Mammary epithelial cell (primary cell): ENCODE measurements at regions of chr6 and their contacts with region 1.

Region 1: GRCh38 chr6:89371849-89372505 is 19.5 kb upstream of the UBE2J1 start:
- DNase-seq: peak; percentile 32
- H3K4me3 ChIP-seq: no peak overlapping the region
- H3K27ac ChIP-seq: no peak overlapping the region
- H3K4me1 ChIP-seq: no peaks in the 10 kb centered on the region
- H3K27me3 ChIP-seq: no peaks in the 10 kb centered on the region
- CTCF ChIP-seq: peak; percentile 94 to 99

Region 2: GRCh38 chr6:89122625-89123024 is 249.4 kb before region 1 on chr6:
- CTCF ChIA-PET with region 1: no interaction called
- dilution Hi-C with region 1: no loop called
- in situ Hi-C with region 1: no loop called
- intact Hi-C with region 1: loop called (anchors 1 kb)
- DNase-seq: peak; percentile 27
- H3K4me3 ChIP-seq: no peak overlapping the region
- H3K27ac ChIP-seq: no peak overlapping the region
- H3K4me1 ChIP-seq: peaks cover 6% of the 10 kb centered on the region
- H3K27me3 ChIP-seq: peaks cover 5% of the 10 kb centered on the region
- CTCF ChIP-seq: peak; percentile 27 to 69

Region 3: GRCh38 chr6:89242574-89243330 is 129.2 kb before region 1 on chr6:
- CTCF ChIA-PET with region 1: no interaction called
- dilution Hi-C with region 1: no loop called
- in situ Hi-C with region 1: no loop called
- intact Hi-C with region 1: loop called (anchors 5 kb)
- DNase-seq: peak; percentile 27
- H3K4me3 ChIP-seq: no peak overlapping the region
- H3K27ac ChIP-seq: no peak overlapping the region
- H3K4me1 ChIP-seq: no peaks in the 10 kb centered on the region
- H3K27me3 ChIP-seq: peaks cover 5% of the 10 kb centered on the region
- CTCF ChIP-seq: peak; percentile 44 to 60

Region 4: DNA sequence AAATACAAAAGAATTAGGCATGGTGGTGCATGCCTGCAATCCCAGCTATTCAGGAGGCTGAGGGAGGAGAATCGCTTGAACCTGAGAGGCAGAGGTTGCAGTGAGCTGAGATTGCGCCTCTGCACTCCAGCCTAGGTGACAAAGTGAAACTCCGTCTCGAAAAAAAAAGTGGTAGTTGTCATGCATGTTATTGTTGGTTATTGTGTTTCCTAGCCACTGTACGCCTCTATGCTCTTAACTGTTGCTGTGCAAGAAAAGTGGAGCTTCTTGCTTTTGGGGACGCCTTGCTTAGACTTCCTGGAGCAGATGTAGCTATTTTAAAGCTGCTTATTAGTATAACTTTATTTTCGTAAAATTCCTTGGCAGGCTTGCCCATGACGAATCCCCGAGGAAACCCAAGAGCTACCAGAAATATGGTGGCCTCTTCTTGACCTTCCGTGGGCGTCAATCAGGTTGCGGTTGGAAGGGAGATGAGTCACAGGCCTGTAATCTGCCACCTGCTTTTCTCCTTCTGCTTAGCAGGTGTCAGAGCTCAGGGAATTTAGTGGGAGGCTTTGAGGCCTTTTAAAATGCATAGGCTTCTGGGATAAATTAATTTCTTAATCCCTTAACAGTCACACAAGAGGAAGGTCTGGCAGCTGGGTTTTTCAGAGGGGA is 74.2 kb before region 1 on chr6:
- CTCF ChIA-PET with region 1: no interaction called
- dilution Hi-C with region 1: loop called (anchors 5 kb)
- in situ Hi-C with region 1: no loop called
- intact Hi-C with region 1: no loop called
- DNase-seq: peak; percentile 95
- H3K4me3 ChIP-seq: no peak overlapping the region
- H3K27ac ChIP-seq: no peak overlapping the region
- H3K4me1 ChIP-seq: peaks cover 17% of the 10 kb centered on the region
- H3K27me3 ChIP-seq: peaks cover 15% of the 10 kb centered on the region
- CTCF ChIP-seq: no peak

Region 5: GRCh38 chr6:89323511-89323971 is 48.4 kb before region 1 on chr6:
- CTCF ChIA-PET with region 1: no interaction called
- dilution Hi-C with region 1: no loop called
- in situ Hi-C with region 1: no loop called
- intact Hi-C with region 1: no loop called
- DNase-seq: no peak
- H3K4me3 ChIP-seq: no peak overlapping the region
- H3K27ac ChIP-seq: no peak overlapping the region
- H3K4me1 ChIP-seq: no peaks in the 10 kb centered on the region
- H3K27me3 ChIP-seq: no peaks in the 10 kb centered on the region
- CTCF ChIP-seq: no peak

Region 6: DNA sequence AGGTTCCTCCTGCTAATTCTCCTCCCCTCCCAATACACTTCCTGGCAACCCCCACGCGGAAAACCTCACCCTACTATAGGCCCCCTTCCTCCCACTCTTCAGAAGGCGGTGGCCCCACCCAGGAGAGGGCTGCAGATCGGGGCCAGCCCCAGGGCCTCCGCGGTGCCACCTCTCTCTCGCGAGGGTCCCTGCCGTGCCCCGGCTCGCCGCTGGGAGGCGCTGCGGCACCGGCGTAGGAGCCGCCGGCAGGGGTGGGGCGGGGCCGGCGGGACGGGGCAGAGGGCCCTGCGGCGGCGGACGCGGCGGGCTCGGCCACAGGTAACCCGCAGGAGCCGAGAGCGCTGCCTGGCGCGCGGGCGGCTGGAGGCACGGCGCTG is 60.9 kb after region 1 on chr6 and contains the start of gene ANKRD6:
- CTCF ChIA-PET with region 1: no interaction called
- dilution Hi-C with region 1: loop called (anchors 10 kb)
- in situ Hi-C with region 1: no loop called
- intact Hi-C with region 1: no loop called
- DNase-seq: peak; percentile 61
- H3K4me3 ChIP-seq: peak within 1 kb of the TSS; percentile 79 to 91 (median 84)
- H3K27ac ChIP-seq: peak within 1 kb of the TSS; percentile 4
- H3K4me1 ChIP-seq: peaks cover 22% of the 10 kb centered on the region
- H3K27me3 ChIP-seq: no peaks in the 10 kb centered on the region
- CTCF ChIP-seq: peak; percentile 65 to 79
- total RNA-seq, gene ANKRD6: 23.4 to 25.8 TPM

Region 7: GRCh38 chr6:89597988-89598692 is 226.2 kb after region 1 on chr6:
- CTCF ChIA-PET with region 1: interaction called, 4 read pairs
- dilution Hi-C with region 1: no loop called
- in situ Hi-C with region 1: no loop called
- intact Hi-C with region 1: loop called (anchors 5 kb)
- DNase-seq: peak; percentile 76
- H3K4me3 ChIP-seq: no peak overlapping the region
- H3K27ac ChIP-seq: no peak overlapping the region
- H3K4me1 ChIP-seq: no peaks in the 10 kb centered on the region
- H3K27me3 ChIP-seq: no peaks in the 10 kb centered on the region
- CTCF ChIP-seq: peak; percentile 21 to 45

Region 8: DNA sequence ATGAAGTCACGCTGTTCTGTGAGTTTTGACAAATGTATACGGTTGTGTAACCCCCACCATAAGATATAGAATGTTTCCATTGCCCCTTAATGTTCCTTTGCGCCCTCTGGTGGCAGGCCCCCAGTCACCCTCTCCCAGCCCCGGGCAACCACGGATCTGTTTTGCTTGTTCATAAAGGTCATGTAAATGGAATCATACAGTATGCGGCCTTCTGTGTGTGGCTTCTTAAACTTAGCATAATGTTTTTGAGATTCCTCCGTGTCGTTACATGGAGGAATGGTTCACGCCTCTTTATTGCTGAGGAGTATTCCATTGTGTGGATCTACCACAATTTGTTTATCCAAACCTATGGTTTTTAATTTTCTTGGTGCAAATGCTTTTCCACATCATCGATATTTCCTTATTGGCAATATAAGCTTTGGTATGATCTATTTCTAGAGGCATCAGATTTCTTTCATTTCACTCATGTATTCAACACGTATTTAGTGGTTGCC is 238.2 kb after region 1 on chr6:
- CTCF ChIA-PET with region 1: no interaction called
- dilution Hi-C with region 1: no loop called
- in situ Hi-C with region 1: no loop called
- intact Hi-C with region 1: loop called (anchors 1 kb)
- DNase-seq: peak; percentile 21
- H3K4me3 ChIP-seq: no peak overlapping the region
- H3K27ac ChIP-seq: no peak overlapping the region
- H3K4me1 ChIP-seq: peaks cover 3% of the 10 kb centered on the region
- H3K27me3 ChIP-seq: no peaks in the 10 kb centered on the region
- CTCF ChIP-seq: peak; percentile 81 to 86